Psoas muscle (tissue), 8 donors: ENCODE measurements at regions of chr9 and their contacts with region 1.

Region 1: DNA sequence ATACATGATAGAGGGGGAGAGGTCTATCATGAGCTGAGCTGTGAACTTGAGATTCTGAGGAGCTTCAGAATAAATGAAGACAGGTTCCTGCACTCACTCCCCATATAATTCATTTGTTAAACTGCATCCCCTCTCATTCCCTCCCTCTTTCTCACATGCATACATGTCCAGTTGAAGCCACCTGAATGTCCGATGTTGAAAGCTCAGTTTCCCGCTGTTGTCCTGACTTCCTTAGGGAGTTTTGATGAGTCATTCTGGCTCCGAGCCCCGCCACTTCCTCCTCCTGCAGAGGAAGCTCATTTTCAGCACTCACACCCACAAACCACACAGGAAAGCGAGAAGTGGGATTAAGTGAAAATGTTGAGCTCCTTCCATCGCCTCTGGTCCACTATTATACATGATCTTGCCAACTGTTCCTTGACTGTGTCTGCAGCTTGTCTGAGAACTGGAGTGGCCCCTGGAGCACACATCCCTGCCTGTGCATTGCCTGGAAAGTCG is 121.2 kb downstream of the CEMIP2 start:
- DNase-seq: peak; percentile 62 to 72
- ATAC-seq: peak in 1 of 4 donors; percentile 28
- H3K4me3 ChIP-seq: no peak overlapping the region
- H3K27ac ChIP-seq: no peak overlapping the region
- H3K4me1 ChIP-seq: peaks cover 7% of the 10 kb centered on the region
- H3K27me3 ChIP-seq: no peaks in the 10 kb centered on the region
- CTCF ChIP-seq: no peak

Region 2: GRCh38 chr9:71393005-71393404 is 254.1 kb before region 1 on chr9:
- intact Hi-C with region 1: loop called in 1 of 2 experiments (anchors 2 kb)
- DNase-seq: no peak
- ATAC-seq: no peak
- H3K4me3 ChIP-seq: no peak overlapping the region
- H3K27ac ChIP-seq: no peak overlapping the region
- H3K4me1 ChIP-seq: no peaks in the 10 kb centered on the region
- H3K27me3 ChIP-seq: no peaks in the 10 kb centered on the region
- CTCF ChIP-seq: no peak

Region 3: DNA sequence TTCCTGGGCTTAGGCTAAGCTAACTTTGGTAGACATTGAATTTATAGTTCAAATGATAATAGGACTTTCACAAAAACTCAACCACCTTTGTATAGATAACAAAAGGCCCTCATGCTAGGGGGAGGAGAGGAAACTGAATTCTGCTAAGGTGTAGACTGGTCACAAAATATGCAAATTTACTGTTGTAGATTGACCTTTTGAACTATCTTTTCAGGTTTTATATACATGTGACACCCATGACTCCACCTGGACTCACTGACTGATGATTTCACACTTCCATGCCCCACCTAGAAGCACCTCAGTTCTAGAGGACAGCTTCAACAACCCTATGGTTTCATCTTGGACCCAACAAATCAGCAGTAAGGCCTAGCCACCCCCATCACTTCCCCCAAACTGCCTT is 44.5 kb before region 1 on chr9:
- intact Hi-C with region 1: no loop called
- DNase-seq: no peak
- ATAC-seq: no peak
- H3K4me3 ChIP-seq: no peak overlapping the region
- H3K27ac ChIP-seq: no peak overlapping the region
- H3K4me1 ChIP-seq: no peaks in the 10 kb centered on the region
- H3K27me3 ChIP-seq: no peaks in the 10 kb centered on the region
- CTCF ChIP-seq: no peak

Region 4: DNA sequence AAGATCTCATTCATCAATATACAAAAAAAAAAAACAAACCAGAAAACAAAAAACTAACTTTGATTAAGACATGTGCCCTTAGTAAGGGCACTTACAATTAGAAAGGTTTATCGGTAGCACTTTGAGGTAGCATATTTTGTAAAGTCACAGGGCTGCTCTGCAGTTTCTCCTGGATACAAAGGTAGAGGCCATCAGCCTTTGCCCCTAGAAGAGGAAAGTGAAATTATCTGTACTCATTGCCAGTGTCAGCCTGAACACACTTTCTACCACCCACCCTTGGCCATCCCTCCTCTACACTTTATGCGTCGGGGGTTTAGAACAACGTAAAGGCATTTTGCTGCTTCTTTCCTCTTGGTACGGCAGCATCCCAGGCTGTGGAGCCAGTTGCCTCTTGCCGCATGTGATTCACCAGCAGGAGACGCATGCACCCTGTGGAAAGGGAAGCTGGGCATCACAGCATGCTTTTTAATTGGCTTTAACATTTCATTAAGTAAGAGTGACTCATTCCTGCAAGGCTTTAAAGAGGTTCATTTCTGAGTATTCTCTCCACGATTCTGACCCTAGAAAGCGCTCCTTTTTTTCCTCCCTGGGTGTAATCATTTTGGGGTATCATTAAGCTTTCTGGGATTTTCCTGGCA is 36.6 kb after region 1 on chr9:
- intact Hi-C with region 1: no loop called
- DNase-seq: no peak
- ATAC-seq: no peak
- H3K4me3 ChIP-seq: no peak overlapping the region
- H3K27ac ChIP-seq: no peak overlapping the region
- H3K4me1 ChIP-seq: no peaks in the 10 kb centered on the region
- H3K27me3 ChIP-seq: no peaks in the 10 kb centered on the region
- CTCF ChIP-seq: no peak